Activated T-helper 1 cell treated with anti-CD3 and anti-CD28 coated beads, Interleukin-12 subunit alpha, Interleukin-12 subunit beta, Interleukin-2, Interleukin-4 antibody, amounts not matched to agents 30 ng/mL and 10 ng/mL and 1 ng/mL, durations not matched to agents 14 hours and 24 hours and 36 hours (primary cell): ENCODE measurements at regions of chr5 and their contacts with region 1.

Region 1: DNA sequence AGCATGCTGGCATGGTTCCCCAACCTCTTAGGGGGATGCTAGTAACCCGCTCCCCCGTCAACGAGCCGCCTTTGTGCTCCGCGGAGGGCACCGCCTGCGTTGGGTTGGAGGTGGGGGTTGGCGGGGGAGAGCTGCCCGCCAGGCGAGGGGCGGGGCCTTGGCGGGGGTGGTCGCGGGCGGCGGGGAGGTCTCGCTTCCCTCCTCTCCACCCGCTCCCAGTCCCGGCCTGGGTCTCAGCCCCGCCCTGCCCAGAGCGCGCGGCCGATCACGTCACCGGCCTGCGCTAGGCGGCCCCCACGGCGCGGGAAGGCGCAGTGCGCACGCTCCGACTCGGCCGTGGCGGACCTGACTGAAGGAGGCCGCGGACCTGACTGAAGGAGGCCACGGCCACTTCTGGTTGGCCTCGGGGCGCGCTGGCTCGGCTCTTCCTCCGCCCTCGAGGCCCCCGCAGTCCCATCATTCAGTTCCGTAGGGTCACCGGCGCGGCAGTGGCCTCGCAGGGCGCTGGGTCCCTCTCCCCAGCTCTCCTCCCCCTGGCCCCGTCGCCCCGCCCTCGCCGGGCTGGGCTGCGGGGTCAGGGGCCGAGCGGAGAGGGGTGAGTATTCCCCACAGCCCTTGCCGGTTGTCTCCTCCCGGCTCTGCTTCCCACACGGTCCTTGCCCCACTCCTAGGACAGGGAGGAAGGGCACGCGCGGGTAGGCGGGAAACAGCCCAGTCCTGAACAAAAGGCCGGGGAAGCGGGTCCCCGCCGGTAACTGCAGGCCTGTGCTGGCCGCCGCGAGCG is at the start of gene ATG10:
- DNase-seq: peak; percentile 86
- H3K4me3 Mint-ChIP-seq: peak within 1 kb of the TSS; percentile 92
- H3K27ac Mint-ChIP-seq: peak within 1 kb of the TSS; percentile 99
- H3K4me1 Mint-ChIP-seq: peaks cover 33% of the 10 kb centered on the region
- H3K27me3 Mint-ChIP-seq: no peaks in the 10 kb centered on the region
- total RNA-seq, gene ATG10: 6.1 and 7.1 TPM in 2 replicates

Region 2: GRCh38 chr5:80754900-80755299 is 1217.0 kb before region 1 on chr5:
- intact Hi-C with region 1: loop called (anchors 10 kb)
- DNase-seq: peak; percentile 16
- H3K4me3 Mint-ChIP-seq: peak overlapping the region; percentile 68
- H3K27ac Mint-ChIP-seq: peak overlapping the region; percentile 97
- H3K4me1 Mint-ChIP-seq: peaks cover 58% of the 10 kb centered on the region
- H3K27me3 Mint-ChIP-seq: no peaks in the 10 kb centered on the region

Region 3: DNA sequence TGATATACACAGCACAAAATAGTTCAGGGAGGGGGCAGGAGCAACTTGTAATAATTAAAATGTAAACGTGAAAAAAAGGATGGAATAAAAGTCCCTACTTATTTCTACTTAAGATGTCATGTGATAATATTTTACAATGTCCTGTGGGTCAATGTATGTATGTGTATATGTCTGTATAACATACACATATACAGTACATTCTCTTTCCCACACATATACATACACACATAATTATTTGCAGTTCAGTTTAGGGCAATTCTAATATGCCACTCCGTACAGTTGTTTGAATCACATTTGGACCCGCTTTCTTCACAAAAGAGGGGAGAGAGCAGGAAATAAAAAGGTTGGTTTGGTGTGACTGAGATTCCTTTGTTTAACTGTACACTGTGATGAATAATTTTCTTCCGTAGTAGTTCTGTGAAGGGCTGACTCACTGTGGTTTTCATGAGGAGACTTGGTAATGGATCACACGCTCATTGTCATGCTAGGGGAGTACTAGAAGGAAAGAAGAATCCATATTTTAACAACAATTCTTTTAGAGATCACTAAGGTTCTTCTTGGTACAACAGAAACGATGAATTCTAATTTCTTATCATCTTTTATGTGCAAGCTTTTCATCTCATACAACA is 551.8 kb before region 1 on chr5:
- intact Hi-C with region 1: loop called (anchors 2 kb)
- DNase-seq: peak; percentile 21
- H3K4me3 Mint-ChIP-seq: peak overlapping the region; percentile 28
- H3K27ac Mint-ChIP-seq: peak overlapping the region; percentile 70
- H3K4me1 Mint-ChIP-seq: peaks cover 36% of the 10 kb centered on the region
- H3K27me3 Mint-ChIP-seq: no peaks in the 10 kb centered on the region

Region 4: DNA sequence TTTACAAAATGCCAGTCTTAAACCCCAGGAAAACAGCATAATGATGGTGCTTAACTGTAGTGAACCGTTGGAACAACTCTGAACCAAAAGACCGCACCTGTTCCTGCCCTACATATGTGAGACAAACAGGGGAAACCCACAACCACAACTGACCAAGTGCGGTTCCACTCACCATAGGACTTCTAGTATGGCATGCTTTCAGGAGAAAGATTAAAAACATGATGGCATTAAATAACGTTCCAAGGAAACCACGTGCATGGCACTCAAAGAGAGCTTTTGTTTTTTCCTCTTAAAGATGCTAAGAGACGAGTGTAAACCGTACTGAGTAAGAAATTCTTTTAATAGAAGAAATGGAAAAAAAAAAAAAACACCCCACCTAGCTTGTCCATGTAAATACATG is 340.8 kb before region 1 on chr5:
- intact Hi-C with region 1: loop called (anchors 5 kb)
- DNase-seq: peak; percentile 16
- H3K4me3 Mint-ChIP-seq: peak overlapping the region; percentile 15
- H3K27ac Mint-ChIP-seq: peak overlapping the region; percentile 13
- H3K4me1 Mint-ChIP-seq: peaks cover 7% of the 10 kb centered on the region
- H3K27me3 Mint-ChIP-seq: no peaks in the 10 kb centered on the region

Region 5: GRCh38 chr5:81759632-81760005 is 212.3 kb before region 1 on chr5:
- intact Hi-C with region 1: no loop called
- DNase-seq: no peak
- H3K4me3 Mint-ChIP-seq: no peak overlapping the region
- H3K27ac Mint-ChIP-seq: no peak overlapping the region
- H3K4me1 Mint-ChIP-seq: no peaks in the 10 kb centered on the region
- H3K27me3 Mint-ChIP-seq: peaks cover 3% of the 10 kb centered on the region

Region 6: GRCh38 chr5:81851481-81852178 is 120.3 kb before region 1 on chr5:
- intact Hi-C with region 1: loop called (anchors 1 kb)
- DNase-seq: peak; percentile 87
- H3K4me3 Mint-ChIP-seq: peak overlapping the region; percentile 94
- H3K27ac Mint-ChIP-seq: peak overlapping the region; percentile 96
- H3K4me1 Mint-ChIP-seq: peaks cover 41% of the 10 kb centered on the region
- H3K27me3 Mint-ChIP-seq: peaks cover 1% of the 10 kb centered on the region

Region 7: DNA sequence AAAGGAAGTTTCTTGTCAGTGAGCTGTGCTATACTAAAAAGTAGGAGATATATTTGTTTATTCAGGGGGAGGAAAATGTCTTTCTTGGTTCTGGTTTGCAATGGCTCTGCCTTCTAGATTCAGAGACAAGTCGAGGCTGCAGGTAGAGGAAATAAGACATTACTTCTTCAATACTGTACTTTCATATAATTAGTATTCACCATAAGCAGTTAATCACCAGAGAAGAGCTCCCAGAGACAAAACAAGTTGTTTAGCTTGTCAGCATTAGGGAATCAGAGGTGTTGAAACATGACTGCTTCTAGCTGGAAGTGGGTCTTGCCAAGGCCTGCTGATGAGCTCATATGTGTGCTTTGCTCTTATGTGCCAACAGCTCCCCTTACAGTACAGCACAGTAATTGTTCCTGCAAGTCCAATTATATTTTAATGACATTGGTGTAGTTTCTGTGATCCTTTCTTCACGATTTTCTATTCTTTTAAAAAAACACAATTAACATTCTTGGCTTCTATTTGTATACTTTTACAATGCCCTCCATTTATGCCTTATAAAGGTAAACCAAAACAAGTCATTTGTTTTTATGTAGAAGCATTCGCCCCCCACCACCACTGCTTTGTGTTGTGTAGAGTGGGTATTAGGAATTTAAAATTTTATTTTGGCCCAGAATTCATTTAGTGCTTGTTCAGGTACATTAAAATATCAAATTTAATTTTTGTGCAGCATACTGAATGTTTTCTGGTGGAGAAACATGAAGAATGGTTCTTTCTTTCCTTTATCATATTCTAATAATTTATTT is 194.0 kb after region 1 on chr5:
- intact Hi-C with region 1: loop called (anchors 5 kb)
- DNase-seq: no peak
- H3K4me3 Mint-ChIP-seq: no peak overlapping the region
- H3K27ac Mint-ChIP-seq: no peak overlapping the region
- H3K4me1 Mint-ChIP-seq: no peaks in the 10 kb centered on the region
- H3K27me3 Mint-ChIP-seq: no peaks in the 10 kb centered on the region

Region 8: DNA sequence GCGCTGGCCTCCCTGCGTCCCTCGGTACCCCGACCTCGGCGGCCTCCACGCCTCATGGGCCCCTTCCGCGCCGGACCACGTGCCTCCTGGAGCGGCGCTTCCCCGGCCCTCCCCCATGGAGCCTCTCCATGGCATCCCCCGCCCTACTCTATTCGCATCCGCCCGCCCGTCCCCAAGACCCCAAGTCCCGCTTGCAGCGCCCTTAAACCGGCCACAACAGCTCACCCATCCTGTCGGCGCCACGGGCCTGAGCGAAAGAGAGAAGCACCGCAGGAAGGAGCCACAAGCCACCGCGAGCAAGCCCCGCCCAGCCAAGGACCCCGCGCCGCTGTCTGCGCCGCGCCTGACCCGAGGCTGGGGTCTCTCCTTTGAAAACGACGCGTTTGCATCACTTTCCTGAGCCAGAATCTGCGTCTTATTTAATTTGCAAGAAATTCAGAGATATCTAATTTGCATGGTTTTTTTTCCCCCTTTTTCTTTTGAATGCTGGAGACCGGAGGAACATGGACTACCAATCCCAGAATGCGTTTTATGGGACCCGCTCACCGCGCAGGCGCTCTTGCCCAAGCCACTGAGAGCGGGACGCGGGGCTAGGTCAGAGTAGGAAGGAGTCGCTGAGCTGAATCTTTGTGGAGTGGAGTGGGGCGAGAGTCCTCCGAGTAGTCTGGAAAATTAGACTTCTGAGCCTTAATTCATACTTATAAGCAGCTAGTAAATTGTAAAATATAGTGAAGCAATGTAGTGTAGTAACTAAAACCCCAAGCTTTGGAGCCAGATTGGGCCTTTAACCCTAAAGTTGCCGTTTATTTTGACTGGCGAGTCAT is 306.4 kb after region 1 on chr5 and contains the start of gene RPS23:
- intact Hi-C with region 1: loop called (anchors 1 kb)
- DNase-seq: peak; percentile 81
- H3K4me3 Mint-ChIP-seq: peak within 1 kb of the TSS; percentile 92
- H3K27ac Mint-ChIP-seq: peak within 1 kb of the TSS; percentile 96
- H3K4me1 Mint-ChIP-seq: peaks cover 34% of the 10 kb centered on the region
- H3K27me3 Mint-ChIP-seq: no peaks in the 10 kb centered on the region
- total RNA-seq, gene RPS23: 2,220 and 2,235 TPM in 2 replicates

Region 9: GRCh38 chr5:82351754-82352145 is 379.8 kb after region 1 on chr5:
- intact Hi-C with region 1: no loop called
- DNase-seq: no peak
- H3K4me3 Mint-ChIP-seq: no peak overlapping the region
- H3K27ac Mint-ChIP-seq: peak overlapping the region; percentile 42
- H3K4me1 Mint-ChIP-seq: peaks cover 71% of the 10 kb centered on the region
- H3K27me3 Mint-ChIP-seq: no peaks in the 10 kb centered on the region